Esophagus squamous epithelium (tissue), 5 donors: ENCODE measurements at regions of chr7 and their contacts with region 1.

Region 1: DNA sequence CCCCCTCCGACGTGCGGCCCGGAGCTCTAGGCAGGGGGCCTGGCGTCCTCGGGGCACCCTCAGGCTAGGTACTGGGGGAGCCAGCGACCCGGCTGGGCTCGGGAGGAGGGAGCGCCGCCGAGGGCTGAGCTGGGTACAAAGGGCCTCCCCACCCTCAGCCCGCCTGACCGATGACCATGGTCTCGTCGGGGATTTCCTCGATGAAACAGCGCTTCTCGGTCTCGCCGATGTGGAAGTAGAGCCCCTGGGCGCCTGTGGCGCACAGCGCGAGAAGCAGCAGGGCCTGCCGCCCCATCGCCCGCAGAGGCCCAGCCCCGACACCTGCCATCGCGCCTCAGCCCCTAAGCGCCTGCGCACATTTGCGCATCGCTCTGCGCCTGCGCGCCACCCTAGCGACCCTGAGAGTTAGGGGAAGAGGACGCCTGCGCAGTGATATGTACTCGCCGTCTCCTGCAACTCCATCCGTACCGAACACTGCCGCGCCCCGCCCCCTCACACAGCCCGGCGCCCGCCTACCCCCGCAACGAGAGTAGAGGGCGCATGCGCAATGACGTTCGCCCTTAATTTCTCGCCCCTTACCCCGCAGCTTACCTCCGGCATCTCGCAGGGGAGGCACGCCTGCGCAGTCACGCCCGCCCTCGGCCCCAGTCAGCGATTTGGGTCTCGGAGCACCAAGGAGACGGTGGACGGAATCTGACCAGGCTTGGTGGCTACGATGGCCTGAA is at the start of gene TMED4:
- DNase-seq: peak; percentile 93
- H3K4me3 ChIP-seq: peak within 1 kb of the TSS; percentile 58 to 97 (median 78)
- H3K27ac ChIP-seq: peak within 1 kb of the TSS; percentile 95 to 99 (median 98)
- H3K4me1 ChIP-seq: peaks cover 15 to 33% (median 22%) of the 10 kb centered on the region in 3 donors
- H3K27me3 ChIP-seq: no peaks in the 10 kb centered on the region
- CTCF ChIP-seq: no peak
- POLR2A ChIP-seq: peak in 3 of 4 donors; percentile 71 to 92 (median 76)
- total RNA-seq, gene TMED4: 68.0 to 123 (median 102) TPM

Region 2: DNA sequence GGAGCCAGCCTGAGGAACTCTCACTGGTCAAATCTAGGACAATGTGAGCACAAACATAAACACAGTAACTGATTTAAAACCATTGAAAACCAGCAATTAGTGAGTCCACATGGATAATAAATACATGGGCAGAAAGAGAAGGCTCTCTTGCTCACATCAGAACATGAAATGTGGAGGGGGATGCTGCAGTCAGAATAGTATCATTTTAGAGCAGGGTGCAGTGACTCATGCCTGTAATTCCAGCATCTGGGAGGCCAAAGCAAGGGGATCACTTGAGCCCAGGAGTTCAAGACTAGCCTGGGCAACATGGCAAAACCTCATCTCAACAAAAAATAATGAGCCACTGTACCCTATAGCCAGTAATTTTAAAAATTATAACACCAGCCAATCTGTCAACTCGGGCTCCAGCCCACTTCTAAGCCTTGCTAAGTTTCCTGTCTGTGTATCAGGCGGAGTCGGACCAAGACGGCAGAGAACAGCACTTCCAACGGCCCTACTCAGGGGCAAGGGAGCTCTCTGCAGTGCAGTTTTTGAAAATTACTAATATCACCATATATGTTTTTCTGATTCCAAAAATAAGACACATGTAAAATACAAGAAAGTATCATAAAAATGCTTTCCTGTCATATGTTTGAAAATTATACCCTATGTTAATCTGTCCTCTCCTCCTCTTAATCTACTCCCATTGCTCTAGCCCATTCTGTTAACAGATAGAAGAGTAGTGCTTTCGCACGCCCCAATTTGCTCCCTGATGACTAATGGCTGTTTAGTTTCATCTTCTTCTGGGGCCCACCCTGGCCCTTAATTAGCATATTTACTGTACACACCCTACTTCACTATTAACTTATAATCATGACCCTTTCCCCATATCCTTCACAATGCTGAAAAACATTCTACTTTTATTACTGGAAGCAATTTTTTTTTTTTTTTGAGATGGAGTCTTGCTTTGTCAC is 692.8 kb before region 1 on chr7:
- intact Hi-C with region 1: no loop called
- DNase-seq: no peak
- H3K4me3 ChIP-seq: no peak overlapping the region
- H3K27ac ChIP-seq: peak overlapping the region in 1 of 4 donors; percentile 1
- H3K4me1 ChIP-seq: peaks cover 0 to 36% (median 8%) of the 10 kb centered on the region in 3 donors
- H3K27me3 ChIP-seq: no peaks in the 10 kb centered on the region
- CTCF ChIP-seq: no peak
- POLR2A ChIP-seq: no peak

Region 3: GRCh38 chr7:44921607-44922359 is 339.7 kb after region 1 on chr7:
- intact Hi-C with region 1: loop called (anchors 10 kb)
- DNase-seq: peak; percentile 58
- H3K4me3 ChIP-seq: no peak overlapping the region
- H3K27ac ChIP-seq: no peak overlapping the region
- H3K4me1 ChIP-seq: peaks cover 0 to 7% (median 3%) of the 10 kb centered on the region in 3 donors
- H3K27me3 ChIP-seq: no peaks in the 10 kb centered on the region
- CTCF ChIP-seq: peak; percentile 77 to 91 (median 81)
- POLR2A ChIP-seq: no peak